ENCODE measurements at regions of chr9 and their contacts with region 1.

Region 1: DNA sequence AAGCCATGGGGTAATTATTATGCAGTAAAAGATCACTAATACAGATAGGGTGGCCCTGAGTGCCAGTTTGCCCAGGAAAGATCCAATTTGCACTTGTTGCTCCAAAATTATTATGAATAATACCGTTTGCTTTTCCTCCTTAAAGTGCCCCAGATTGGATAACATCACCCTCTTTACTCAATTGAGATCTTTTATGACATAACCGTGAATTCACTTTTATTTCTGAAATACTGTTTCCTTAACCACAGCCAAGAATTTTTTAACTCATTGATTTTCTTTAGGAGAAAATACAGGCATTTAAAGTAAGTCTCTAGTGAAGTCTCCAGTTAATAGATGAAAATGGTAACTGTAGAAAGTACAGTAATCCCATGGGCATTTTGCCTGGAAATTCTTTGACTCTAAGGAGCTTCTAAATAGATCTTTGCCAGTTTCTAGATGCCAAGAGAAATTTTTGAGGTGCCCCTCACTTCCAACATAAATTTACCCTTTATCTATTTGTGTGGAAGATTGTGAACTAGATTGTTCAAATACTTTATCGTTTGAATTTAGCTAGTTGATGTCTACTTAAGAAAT is 99.2 kb downstream of the UHRF2 start:
- DNase-seq: no peak
- ATAC-seq: no peak
- H3K4me3 ChIP-seq: no peak overlapping the region
- H3K27ac ChIP-seq: no peak overlapping the region
- H3K4me1 ChIP-seq: no peaks in the 10 kb centered on the region
- H3K27me3 ChIP-seq: no peaks in the 10 kb centered on the region
- CTCF ChIP-seq: no peak
- POLR2A ChIP-seq: no peak

Region 2: GRCh38 chr9:6467006-6467625 is 45.1 kb before region 1 on chr9:
- intact Hi-C with region 1: loop called in 1 of 10 experiments (anchors 10 kb)
- DNase-seq: no peak
- ATAC-seq: no peak
- H3K4me3 ChIP-seq: no peak overlapping the region
- H3K27ac ChIP-seq: no peak overlapping the region
- H3K4me1 ChIP-seq: peaks cover 0 to 10% (median 0%) of the 10 kb centered on the region in 12 donors
- H3K27me3 ChIP-seq: no peaks in the 10 kb centered on the region
- CTCF ChIP-seq: no peak
- POLR2A ChIP-seq: no peak

Measured in heart left ventricle (tissue), 16 donors.